ENCODE measurements at regions of chr1 and their contacts with region 1.

Region 1: DNA sequence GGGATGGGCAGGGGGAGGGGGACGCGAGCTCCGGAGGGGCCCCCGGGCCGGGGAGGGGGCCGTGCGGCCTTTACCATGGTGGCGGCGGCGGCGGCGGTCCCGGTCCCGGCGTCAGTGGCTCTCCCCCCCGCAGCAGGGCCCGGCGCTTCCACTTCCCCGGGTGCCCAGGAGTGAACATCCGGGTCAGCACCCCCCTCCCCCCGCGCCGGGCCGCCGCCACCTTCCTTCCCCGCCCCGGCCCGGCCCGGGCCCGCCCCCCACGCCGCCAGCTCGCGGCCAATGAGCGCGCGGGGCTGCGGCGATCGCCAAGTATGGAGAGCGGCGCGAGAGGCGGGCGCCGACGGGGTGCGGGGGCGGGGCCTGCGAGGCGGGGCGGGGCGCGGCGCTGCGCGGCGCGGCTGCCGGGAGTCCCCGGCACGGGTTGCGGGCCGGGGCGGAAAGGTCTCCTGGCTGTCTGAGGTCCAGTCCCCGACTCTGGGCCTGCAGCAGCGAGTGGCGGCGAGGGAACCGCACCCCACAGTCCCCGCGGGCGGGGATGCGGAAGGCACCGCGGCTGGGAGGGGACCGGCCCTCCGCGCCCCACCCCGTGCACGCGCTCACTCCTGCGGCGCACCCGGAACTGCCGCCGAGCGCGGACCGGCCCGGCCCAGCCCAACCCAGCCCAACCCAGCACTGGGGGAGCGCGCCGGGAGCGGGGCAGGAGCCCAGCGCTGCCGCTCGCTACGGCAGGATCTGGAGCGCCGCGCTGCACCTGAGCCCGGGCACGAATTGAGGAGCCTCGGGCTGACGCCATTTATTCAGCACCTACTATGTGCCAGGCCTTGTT is at the start of gene CAPZB:
- DNase-seq: peak; percentile 92 to 93
- ATAC-seq: peak; percentile 85 to 88
- H3K4me3 ChIP-seq: peak within 1 kb of the TSS; percentile 83 to 98 (median 90)
- H3K27ac ChIP-seq: peak within 1 kb of the TSS; percentile 87 to 99 (median 97)
- H3K4me1 ChIP-seq: peaks cover 52 to 56% of the 10 kb centered on the region in 2 donors
- H3K27me3 ChIP-seq: no peaks in the 10 kb centered on the region
- CTCF ChIP-seq: no peak
- POLR2A ChIP-seq: peak; percentile 79 to 84
- total RNA-seq, gene CAPZB: 48.6 to 93.8 (median 74.9) TPM

Region 2: DNA sequence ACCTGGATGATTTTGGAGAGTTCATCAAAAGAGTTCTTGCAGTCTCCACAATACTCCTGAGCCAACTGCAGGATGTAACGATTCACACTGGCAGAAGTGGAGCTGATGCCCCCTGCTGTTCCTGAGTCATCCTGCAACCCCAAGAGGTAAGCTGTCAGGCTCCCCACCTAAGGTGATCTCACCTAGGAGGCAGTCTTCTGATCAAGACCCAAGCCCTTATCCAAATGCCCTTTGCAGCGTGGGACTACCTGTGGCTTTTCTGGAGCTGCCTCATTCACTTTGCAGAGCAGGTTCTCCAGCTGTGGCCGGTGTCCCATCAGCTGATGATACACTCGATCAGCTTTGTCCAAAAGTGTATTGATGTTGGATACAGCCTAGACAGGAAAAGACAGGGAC is 371.9 kb before region 1 on chr1:
- in situ Hi-C with region 1: no loop called
- intact Hi-C with region 1: no loop called
- DNase-seq: no peak
- ATAC-seq: no peak
- H3K4me3 ChIP-seq: no peak overlapping the region
- H3K27ac ChIP-seq: no peak overlapping the region
- H3K4me1 ChIP-seq: no peaks in the 10 kb centered on the region
- H3K27me3 ChIP-seq: no peaks in the 10 kb centered on the region
- CTCF ChIP-seq: peak in 1 of 5 experiments; percentile 25
- POLR2A ChIP-seq: no peak

Region 3: GRCh38 chr1:19139711-19140110 is 345.9 kb before region 1 on chr1:
- in situ Hi-C with region 1: no loop called
- intact Hi-C with region 1: no loop called
- DNase-seq: no peak
- ATAC-seq: no peak
- H3K4me3 ChIP-seq: no peak overlapping the region
- H3K27ac ChIP-seq: no peak overlapping the region
- H3K4me1 ChIP-seq: no peaks in the 10 kb centered on the region
- H3K27me3 ChIP-seq: no peaks in the 10 kb centered on the region
- CTCF ChIP-seq: no peak
- POLR2A ChIP-seq: no peak

Region 4: DNA sequence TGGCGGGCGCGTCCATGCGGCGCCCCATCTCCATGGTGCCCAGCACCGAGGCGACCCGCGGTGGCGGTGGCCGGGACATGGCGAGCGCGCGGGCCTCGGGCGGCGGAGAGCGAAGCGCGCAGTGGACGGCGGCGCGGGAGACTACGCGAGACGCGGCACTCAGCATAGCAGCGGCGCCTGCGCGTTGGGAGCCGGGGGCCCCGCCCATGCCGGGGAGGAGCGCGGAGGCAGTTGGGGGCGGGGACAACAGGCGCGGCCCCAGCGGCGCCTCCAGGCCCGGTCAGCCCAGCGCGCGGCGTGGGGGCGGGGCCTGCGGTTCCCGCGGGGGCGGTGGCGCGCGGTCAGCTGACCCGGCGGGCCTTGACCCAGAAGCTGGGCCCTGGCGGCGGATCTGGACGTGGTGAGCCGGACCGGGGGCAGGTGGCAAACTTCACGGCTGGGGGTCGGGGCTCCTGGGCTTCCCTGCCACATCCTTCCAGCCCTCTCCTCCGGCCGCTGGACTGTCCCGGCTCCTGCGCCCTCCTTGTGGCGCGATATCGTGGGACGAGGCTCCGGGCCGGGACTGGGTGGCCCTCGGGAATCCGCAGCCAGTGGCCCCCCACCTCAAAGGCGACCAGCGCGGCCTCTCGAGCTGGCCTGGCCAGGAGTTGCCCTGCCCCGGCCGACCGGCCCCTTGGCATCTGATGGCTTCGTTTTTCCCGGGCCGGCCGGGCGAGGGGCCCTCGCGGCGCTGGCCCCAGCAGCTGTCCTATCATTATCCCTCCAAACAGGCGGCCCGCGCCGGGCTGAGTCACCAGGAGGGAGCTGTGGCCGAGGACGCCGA is 173.4 kb before region 1 on chr1 and contains the starts of genes AKR7A2 and SLC66A1:
- in situ Hi-C with region 1: no loop called
- intact Hi-C with region 1: loop called (anchors 2 kb)
- DNase-seq: peak; percentile 85 to 92
- ATAC-seq: peak; percentile 87 to 91
- H3K4me3 ChIP-seq: peak within 1 kb of the TSS; percentile 79 to 97 (median 87)
- H3K27ac ChIP-seq: peak within 1 kb of the TSS; percentile 93 to 97 (median 96)
- H3K4me1 ChIP-seq: peaks cover 19 to 20% of the 10 kb centered on the region in 2 donors
- H3K27me3 ChIP-seq: no peaks in the 10 kb centered on the region
- CTCF ChIP-seq: peak; percentile 13 to 36 (median 17)
- POLR2A ChIP-seq: peak; percentile 91 to 92
- total RNA-seq, gene AKR7A2: 45.4 to 80.2 (median 60.2) TPM
- total RNA-seq, gene SLC66A1: 13.9 to 30.0 (median 19.3) TPM

Region 5: GRCh38 chr1:19384113-19384512 is 101.5 kb before region 1 on chr1:
- in situ Hi-C with region 1: loop called in 2 of 4 experiments (anchors 10 to 25 kb)
- intact Hi-C with region 1: no loop called
- DNase-seq: no peak
- ATAC-seq: no peak
- H3K4me3 ChIP-seq: no peak overlapping the region
- H3K27ac ChIP-seq: no peak overlapping the region
- H3K4me1 ChIP-seq: peaks cover 16 to 17% of the 10 kb centered on the region in 2 donors
- H3K27me3 ChIP-seq: no peaks in the 10 kb centered on the region
- CTCF ChIP-seq: no peak
- POLR2A ChIP-seq: no peak

Region 6: GRCh38 chr1:19400875-19401534 is 84.6 kb before region 1 on chr1:
- in situ Hi-C with region 1: loop called in 1 of 4 experiments (anchors 25 kb)
- intact Hi-C with region 1: loop called (anchors 5 kb)
- DNase-seq: no peak
- ATAC-seq: peak in 1 of 2 donors; percentile 42
- H3K4me3 ChIP-seq: no peak overlapping the region
- H3K27ac ChIP-seq: peak overlapping the region in 2 of 4 donors; percentile 4 to 24
- H3K4me1 ChIP-seq: peaks cover 41 to 44% of the 10 kb centered on the region in 2 donors
- H3K27me3 ChIP-seq: no peaks in the 10 kb centered on the region
- CTCF ChIP-seq: no peak
- POLR2A ChIP-seq: no peak

Region 7: DNA sequence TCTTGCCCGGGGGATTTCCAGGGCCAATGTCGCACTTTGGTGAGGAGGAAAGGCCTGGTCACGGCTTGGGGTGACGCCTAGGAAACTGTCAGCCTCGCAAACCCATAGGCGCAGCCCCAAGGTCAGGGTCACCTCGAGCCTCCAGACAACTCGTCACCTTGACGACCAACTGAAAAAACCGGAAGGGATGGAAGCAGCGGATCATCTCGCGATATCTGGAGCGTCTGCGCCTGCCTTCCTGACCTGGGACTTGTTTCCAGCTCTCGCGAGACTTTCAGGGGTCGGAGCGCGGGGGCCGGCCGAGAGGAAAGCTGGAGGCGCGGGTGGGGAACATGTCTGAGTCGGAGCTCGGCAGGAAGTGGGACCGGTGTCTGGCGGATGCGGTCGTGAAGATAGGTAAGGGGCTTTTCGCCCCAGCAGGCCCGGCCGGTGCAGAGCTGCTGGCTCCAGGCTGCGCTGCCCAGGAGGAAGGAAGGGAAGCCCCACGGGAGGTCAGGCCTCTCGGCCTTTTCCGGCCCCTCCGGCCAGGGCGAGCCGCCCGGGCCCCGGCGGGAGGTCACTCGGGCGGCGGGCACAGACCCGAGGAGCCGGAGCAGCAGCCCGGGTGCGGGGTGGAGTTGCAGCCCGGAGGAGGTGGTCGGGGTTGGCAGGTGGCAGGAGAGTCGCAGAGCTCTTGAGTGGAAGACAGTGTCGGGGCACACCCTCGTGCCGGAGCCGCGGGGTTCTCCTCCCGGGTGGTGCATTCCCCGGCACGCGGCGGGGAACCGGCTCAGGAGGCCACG is 111.3 kb after region 1 on chr1:
- in situ Hi-C with region 1: loop called in 1 of 4 experiments (anchors 10 kb)
- intact Hi-C with region 1: loop called (anchors 2 kb)
- DNase-seq: peak; percentile 94 to 96
- ATAC-seq: peak; percentile 95 to 98
- H3K4me3 ChIP-seq: peak overlapping the region; percentile 82 to 100 (median 85)
- H3K27ac ChIP-seq: peak overlapping the region; percentile 81 to 95 (median 94)
- H3K4me1 ChIP-seq: peaks cover 24 to 27% of the 10 kb centered on the region in 2 donors
- H3K27me3 ChIP-seq: no peaks in the 10 kb centered on the region
- CTCF ChIP-seq: no peak
- POLR2A ChIP-seq: peak; percentile 63 to 69

Measured in gastrocnemius medialis (tissue), 4 donors.